ENCODE measurements at regions of chr1 and their contacts with region 1.

Region 1: GRCh38 chr1:42913426-42914091 is 45.1 kb downstream of the SLC2A1 start:
- DNase-seq: peak in 9 of 10 donors; percentile 46 to 87 (median 71)
- ATAC-seq: peak; percentile 87 to 93
- H3K4me3 Mint-ChIP-seq: no peak overlapping the region
- H3K27ac Mint-ChIP-seq: no peak overlapping the region
- H3K4me1 Mint-ChIP-seq: peaks cover 2 to 10% (median 6%) of the 10 kb centered on the region in 4 donors
- H3K27me3 Mint-ChIP-seq: peaks cover 0 to 10% (median 1%) of the 10 kb centered on the region in 5 donors

Region 2: DNA sequence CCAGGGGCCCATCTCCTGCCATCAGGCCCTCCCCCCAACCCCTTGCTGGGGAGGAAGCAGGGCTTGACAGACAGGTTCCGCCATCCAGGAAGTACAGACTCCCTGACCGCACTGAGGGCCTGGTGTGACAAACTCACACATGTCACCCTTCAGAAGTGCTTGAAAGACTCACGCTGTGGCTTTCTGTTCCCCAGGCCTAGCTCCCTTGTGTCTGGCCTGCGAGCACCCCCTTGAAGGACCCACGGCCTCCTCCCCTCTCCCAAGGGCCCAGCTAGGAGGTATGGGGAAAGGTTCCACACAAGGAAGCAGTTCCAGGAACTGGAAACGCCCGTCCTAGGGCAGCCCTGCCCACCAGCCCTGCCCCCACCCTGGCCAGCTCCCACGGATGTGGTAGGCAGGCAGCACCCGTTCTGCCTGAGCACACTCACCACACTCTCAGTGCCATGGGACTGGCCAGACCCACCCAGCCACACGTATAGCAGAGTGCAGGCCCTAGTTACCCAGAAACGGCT is 18.4 kb after region 1 on chr1:
- POLR2A ChIA-PET with region 1: no interaction called
- DNase-seq: peak; percentile 34 to 90 (median 78)
- ATAC-seq: peak; percentile 83 to 84
- H3K4me3 Mint-ChIP-seq: peak overlapping the region; percentile 55 to 91 (median 78)
- H3K27ac Mint-ChIP-seq: peak overlapping the region; percentile 90 to 99 (median 96)
- H3K4me1 Mint-ChIP-seq: peaks cover 48 to 84% (median 80%) of the 10 kb centered on the region in 4 donors
- H3K27me3 Mint-ChIP-seq: no peaks in the 10 kb centered on the region

Region 3: GRCh38 chr1:43073490-43074230 is 160.1 kb after region 1 on chr1:
- POLR2A ChIA-PET with region 1: interaction called, 22 read pairs
- DNase-seq: peak; percentile 51 to 88 (median 74)
- ATAC-seq: peak; percentile 80 to 97
- H3K4me3 Mint-ChIP-seq: peak overlapping the region in 1 of 10 donors; percentile 6
- H3K27ac Mint-ChIP-seq: peak overlapping the region in 6 of 10 donors; percentile 23 to 82 (median 53)
- H3K4me1 Mint-ChIP-seq: peaks cover 7 to 29% (median 12%) of the 10 kb centered on the region in 4 donors
- H3K27me3 Mint-ChIP-seq: no peaks in the 10 kb centered on the region

Measured in naive thymus-derived CD8-positive, alpha-beta T cell (primary cell).